PC-3 (cell line): ENCODE measurements at regions of chr9 and their contacts with region 1.

Region 1: GRCh38 chr9:3386753-3387152 is 139.0 kb downstream of the RFX3 start:
- DNase-seq: no peak
- ATAC-seq: no peak
- H3K4me3 ChIP-seq: no peak overlapping the region
- H3K27ac ChIP-seq: no peak overlapping the region
- H3K4me1 ChIP-seq: no peaks in the 10 kb centered on the region
- H3K27me3 ChIP-seq: no peaks in the 10 kb centered on the region
- CTCF ChIP-seq: no peak

Region 2: GRCh38 chr9:2620919-2621679 is 765.7 kb before region 1 on chr9:
- CTCF ChIA-PET with region 1: no interaction called
- POLR2A ChIA-PET with region 1: no interaction called
- intact Hi-C with region 1: no loop called
- DNase-seq: peak; percentile 44
- ATAC-seq: peak; percentile 79
- H3K4me3 ChIP-seq: peak overlapping the region; percentile 67
- H3K27ac ChIP-seq: no peak overlapping the region
- H3K4me1 ChIP-seq: no peaks in the 10 kb centered on the region
- H3K27me3 ChIP-seq: 0 out of 2 replicates have a peak, but pooled peaks cover 3% of the 10 kb centered on the region
- CTCF ChIP-seq: no peak

Region 3: DNA sequence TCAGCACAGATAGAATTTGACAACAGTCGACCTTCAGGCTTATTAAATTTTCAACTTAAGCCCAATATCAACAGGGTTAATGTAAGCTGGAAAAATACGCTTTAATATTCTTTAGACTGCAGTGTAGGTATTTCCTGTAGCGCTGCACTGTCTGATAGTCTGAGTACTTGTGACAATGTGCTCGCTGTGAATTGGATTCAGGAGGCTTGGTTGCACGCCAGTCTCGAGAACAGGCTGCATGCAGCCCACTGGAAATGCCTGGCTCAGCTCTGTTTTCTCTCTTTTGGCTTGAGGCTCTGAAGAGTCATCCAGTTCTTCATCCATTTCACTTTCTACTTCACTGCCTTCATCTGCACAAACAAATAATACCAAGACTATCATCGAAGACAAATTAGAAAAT is 161.8 kb before region 1 on chr9:
- CTCF ChIA-PET with region 1: no interaction called
- POLR2A ChIA-PET with region 1: no interaction called
- intact Hi-C with region 1: no loop called
- DNase-seq: no peak
- ATAC-seq: no peak
- H3K4me3 ChIP-seq: no peak overlapping the region
- H3K27ac ChIP-seq: no peak overlapping the region
- H3K4me1 ChIP-seq: no peaks in the 10 kb centered on the region
- H3K27me3 ChIP-seq: no peaks in the 10 kb centered on the region
- CTCF ChIP-seq: no peak

Region 4: GRCh38 chr9:3419893-3420292 is 33.1 kb after region 1 on chr9:
- CTCF ChIA-PET with region 1: no interaction called
- POLR2A ChIA-PET with region 1: no interaction called
- intact Hi-C with region 1: loop called (anchors 1 kb)
- DNase-seq: no peak
- ATAC-seq: no peak
- H3K4me3 ChIP-seq: no peak overlapping the region
- H3K27ac ChIP-seq: no peak overlapping the region
- H3K4me1 ChIP-seq: no peaks in the 10 kb centered on the region
- H3K27me3 ChIP-seq: no peaks in the 10 kb centered on the region
- CTCF ChIP-seq: no peak